ENCODE measurements at regions of chr11 and their contacts with region 1.

Region 1: DNA sequence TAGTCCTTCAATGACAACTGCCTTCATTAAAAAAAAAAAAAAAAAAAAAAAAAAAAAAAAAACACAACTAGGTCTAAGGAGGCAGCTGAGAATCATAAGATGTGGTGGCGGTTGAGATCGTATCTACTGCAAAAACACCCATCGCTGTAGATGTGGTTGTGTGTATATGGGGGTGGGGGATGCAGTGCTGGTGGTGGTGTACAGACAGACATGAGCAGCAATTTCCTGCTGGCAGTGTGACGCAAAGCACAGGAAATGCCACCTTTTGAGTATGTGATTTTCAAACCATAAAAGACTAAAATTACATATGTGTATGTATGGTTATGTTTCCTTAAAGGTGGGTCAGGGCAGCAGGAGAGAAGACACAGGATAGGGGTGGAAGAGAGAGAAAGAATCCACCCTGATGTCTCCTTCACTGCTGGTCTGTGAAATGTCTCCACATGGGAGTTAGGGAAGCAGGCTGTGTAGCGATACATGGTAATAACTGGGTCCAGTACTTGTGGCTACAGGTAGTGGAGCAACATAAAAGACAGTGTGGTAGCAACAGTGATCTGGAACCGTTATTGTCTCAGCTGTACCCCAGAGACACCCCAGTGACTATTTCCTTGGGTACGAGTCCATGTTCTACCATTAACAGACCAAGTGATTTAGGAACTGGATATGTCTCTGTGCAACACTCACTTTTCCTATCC is 57.9 kb downstream of the SYTL2 start:
- DNase-seq: peak; percentile 90
- ATAC-seq: peak; percentile 89
- H3K4me3 Mint-ChIP-seq: peak overlapping the region; percentile 47
- H3K27ac Mint-ChIP-seq: peak overlapping the region; percentile 94
- H3K4me1 Mint-ChIP-seq: peaks cover 91% of the 10 kb centered on the region
- H3K27me3 Mint-ChIP-seq: no peaks in the 10 kb centered on the region

Region 2: DNA sequence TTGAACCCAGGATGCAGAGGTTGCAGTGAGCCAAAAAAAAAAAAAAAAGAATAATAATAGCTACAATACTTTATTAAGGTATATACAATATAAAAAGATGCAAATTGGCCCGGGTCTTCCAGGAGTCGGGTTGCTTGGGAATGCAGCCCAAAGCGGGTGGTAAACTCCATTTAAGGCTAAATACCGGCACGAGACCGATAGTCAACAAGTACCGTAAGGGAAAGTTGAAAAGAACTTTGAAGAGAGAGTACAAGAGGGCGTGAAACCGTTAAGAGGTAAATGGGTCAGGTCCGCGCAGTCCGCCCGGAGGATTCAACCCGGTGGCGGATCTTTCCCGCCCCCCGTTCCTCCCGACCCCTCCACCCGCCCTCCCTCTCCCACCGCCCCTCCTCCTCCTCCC is 269.2 kb before region 1 on chr11:
- CTCF ChIA-PET with region 1: no interaction called
- POLR2A ChIA-PET with region 1: no interaction called
- intact Hi-C with region 1: no loop called
- DNase-seq: no peak
- ATAC-seq: no peak
- H3K4me3 Mint-ChIP-seq: no peak overlapping the region
- H3K27ac Mint-ChIP-seq: no peak overlapping the region
- H3K4me1 Mint-ChIP-seq: no peaks in the 10 kb centered on the region
- H3K27me3 Mint-ChIP-seq: no peaks in the 10 kb centered on the region

Region 3: GRCh38 chr11:85699957-85700741 is 52.9 kb before region 1 on chr11:
- CTCF ChIA-PET with region 1: interaction called, 5 read pairs
- POLR2A ChIA-PET with region 1: no interaction called
- intact Hi-C with region 1: loop called (anchors 1 to 5 kb)
- DNase-seq: no peak
- ATAC-seq: peak; percentile 49
- H3K4me3 Mint-ChIP-seq: peak overlapping the region; percentile 31
- H3K27ac Mint-ChIP-seq: peak overlapping the region; percentile 87
- H3K4me1 Mint-ChIP-seq: peaks cover 33% of the 10 kb centered on the region
- H3K27me3 Mint-ChIP-seq: no peaks in the 10 kb centered on the region

Region 4: GRCh38 chr11:85718991-85719807 is 33.8 kb before region 1 on chr11:
- CTCF ChIA-PET with region 1: no interaction called
- POLR2A ChIA-PET with region 1: no interaction called
- intact Hi-C with region 1: no loop called
- DNase-seq: no peak
- ATAC-seq: no peak
- H3K4me3 Mint-ChIP-seq: no peak overlapping the region
- H3K27ac Mint-ChIP-seq: no peak overlapping the region
- H3K4me1 Mint-ChIP-seq: peaks cover 3% of the 10 kb centered on the region
- H3K27me3 Mint-ChIP-seq: no peaks in the 10 kb centered on the region

Region 5: DNA sequence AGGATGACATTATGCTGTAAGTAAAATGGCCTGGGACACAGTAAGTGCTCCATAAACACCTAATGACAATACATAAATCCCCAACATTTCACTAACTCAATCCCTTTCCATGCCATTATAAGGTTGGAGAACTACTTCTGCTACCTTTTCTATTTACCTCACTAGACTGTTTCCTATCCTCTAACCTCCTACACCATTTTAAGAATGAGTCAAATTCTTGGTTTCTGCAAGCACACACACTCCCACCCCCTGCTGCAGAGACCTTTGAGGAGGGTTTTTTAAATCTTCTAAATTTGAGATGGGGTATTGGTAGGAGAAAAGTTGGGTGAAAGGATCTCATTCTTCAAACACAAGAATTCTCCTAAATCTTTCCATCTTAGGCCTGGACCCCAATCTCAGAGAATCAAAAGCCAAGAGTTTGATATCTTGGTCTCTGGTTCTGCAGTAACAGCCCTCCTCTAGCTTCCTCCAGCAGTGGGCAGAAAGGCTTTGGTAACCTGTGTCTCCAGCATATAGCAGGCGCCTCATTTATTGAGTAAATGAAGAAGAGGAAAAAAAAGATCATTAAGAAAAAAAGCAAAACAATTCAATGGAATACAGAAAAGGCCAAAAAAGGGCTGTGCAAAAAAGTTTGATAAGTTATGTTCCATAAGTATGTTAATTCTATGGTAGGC is 15.6 kb after region 1 on chr11:
- CTCF ChIA-PET with region 1: interaction called, 3 read pairs
- POLR2A ChIA-PET with region 1: no interaction called
- intact Hi-C with region 1: loop called in 1 of 2 experiments (anchors 1 kb)
- DNase-seq: peak; percentile 31
- ATAC-seq: peak; percentile 89
- H3K4me3 Mint-ChIP-seq: no peak overlapping the region
- H3K27ac Mint-ChIP-seq: peak overlapping the region; percentile 26
- H3K4me1 Mint-ChIP-seq: peaks cover 38% of the 10 kb centered on the region
- H3K27me3 Mint-ChIP-seq: no peaks in the 10 kb centered on the region

Region 6: DNA sequence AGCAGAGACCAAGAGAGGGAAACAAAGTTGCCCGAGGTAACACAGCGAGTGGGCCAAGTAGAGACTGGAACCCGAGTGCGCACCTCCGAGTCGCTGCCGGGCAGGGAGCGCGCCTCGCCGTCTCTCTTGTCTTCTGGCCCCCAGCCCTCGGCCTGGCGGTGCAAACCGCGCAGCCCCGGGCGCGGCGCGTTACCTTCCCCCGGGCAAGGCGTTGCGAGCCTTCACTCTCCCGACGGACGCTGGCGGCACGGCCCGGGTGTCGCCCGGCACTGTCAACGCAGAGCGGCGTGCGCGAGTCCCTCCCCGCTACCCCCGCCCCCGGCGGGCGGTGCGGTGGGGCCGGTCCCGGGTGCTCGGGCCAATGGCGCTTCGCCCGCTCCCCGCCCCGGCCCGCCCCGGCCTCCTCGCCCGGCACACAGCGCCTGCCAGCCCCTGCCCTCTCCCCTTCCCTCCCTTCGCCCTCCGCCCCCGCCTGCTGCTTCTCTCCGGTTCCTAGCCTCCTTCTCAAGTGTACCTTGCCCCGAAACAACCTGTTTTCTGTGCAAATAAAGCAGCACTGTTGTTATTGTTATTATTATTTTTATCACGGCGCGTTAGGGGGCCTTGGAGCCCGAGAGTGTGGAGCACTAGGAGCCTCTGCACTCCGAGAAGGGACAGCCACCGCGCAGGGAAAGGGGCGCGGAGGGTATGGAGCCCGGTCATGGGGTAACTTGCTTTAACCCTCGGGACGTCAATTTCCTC is 58.0 kb after region 1 on chr11 and contains the start of gene SYTL2:
- CTCF ChIA-PET with region 1: no interaction called
- POLR2A ChIA-PET with region 1: no interaction called
- intact Hi-C with region 1: loop called in 1 of 2 experiments (anchors 2 kb)
- DNase-seq: peak; percentile 84
- ATAC-seq: peak; percentile 95
- H3K4me3 Mint-ChIP-seq: peak within 1 kb of the TSS; percentile 73
- H3K27ac Mint-ChIP-seq: peak within 1 kb of the TSS; percentile 63
- H3K4me1 Mint-ChIP-seq: peaks cover 33% of the 10 kb centered on the region
- H3K27me3 Mint-ChIP-seq: peaks cover 8% of the 10 kb centered on the region
- total RNA-seq, gene SYTL2: 5.2 to 6.8 TPM

Region 7: DNA sequence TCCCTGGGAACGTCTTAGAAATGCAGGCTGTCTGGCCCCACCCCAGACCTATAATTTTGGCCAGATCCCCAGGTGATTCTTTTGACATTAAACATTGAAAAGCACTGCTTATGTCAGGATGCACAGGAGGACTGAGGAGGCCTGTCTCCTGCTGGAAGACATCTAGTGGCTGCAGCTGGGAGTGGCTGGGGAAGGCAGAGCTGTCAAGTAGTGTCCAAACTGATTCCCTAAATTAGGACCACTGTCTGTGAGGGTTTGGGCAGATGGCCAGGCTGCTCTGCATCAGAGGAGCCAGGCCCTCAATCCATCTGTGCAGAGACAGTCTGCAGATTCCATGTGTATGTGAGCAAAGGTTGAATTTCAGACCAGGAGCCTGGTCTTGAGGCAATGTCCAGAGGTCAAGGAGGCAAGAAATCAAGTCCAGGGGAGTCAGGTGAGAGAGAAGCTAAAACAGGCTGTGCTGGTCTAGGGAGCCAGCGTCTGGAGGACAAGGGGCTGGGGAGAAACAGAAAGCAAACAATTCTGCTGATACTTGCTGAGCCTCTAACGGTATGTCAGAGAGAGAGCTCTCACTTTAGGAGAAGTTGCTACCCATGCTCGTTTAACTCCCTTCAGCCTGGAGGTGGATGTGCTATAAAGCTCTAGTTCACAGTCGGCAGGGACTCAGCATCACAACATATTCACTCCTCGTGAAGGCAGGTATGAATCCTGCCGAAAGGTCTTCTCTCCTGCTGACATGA is 73.2 kb after region 1 on chr11:
- CTCF ChIA-PET with region 1: interaction called, 3 read pairs
- POLR2A ChIA-PET with region 1: no interaction called
- intact Hi-C with region 1: loop called (anchors 1 kb)
- DNase-seq: peak; percentile 48
- ATAC-seq: no peak
- H3K4me3 Mint-ChIP-seq: no peak overlapping the region
- H3K27ac Mint-ChIP-seq: peak overlapping the region; percentile 11
- H3K4me1 Mint-ChIP-seq: peaks cover 65% of the 10 kb centered on the region
- H3K27me3 Mint-ChIP-seq: no peaks in the 10 kb centered on the region

Region 8: DNA sequence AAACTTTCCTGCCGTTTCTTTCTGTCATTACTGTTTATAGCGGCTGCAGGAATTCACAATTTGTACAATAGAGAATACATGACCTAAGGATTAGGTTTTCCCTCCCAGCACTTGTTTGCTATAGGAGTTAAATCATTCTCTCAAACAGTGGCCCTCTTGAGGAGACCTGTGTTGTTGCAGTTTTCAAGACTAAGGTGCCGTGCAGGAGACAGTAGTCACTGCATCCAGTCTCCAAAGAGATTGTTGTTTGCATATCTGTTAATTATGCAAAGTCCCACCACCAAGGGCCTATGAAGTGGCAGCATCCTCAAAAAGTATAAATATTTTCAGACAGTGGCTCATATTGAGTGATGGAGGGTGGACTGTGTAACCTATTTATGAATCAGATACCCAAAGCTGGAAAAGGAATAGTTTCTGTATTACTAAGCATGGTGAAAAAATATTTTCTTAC is 1049.6 kb after region 1 on chr11:
- CTCF ChIA-PET with region 1: no interaction called
- POLR2A ChIA-PET with region 1: no interaction called
- intact Hi-C with region 1: loop called in 1 of 2 experiments (anchors 5 kb)
- DNase-seq: peak; percentile 39
- ATAC-seq: peak; percentile 34
- H3K4me3 Mint-ChIP-seq: no peak overlapping the region
- H3K27ac Mint-ChIP-seq: no peak overlapping the region
- H3K4me1 Mint-ChIP-seq: peaks cover 62% of the 10 kb centered on the region
- H3K27me3 Mint-ChIP-seq: peaks cover 55% of the 10 kb centered on the region

Measured in activated CD4-positive, alpha-beta T cell treated with anti-CD3 and anti-CD28 coated beads for 36 hours (primary cell).